Activated CD4-positive, alpha-beta memory T cell treated with anti-CD3 and anti-CD28 coated beads, Interleukin-2, amount 10 ng/mL, durations not matched to agents 7 days and 5 days (primary cell): ENCODE measurements at regions of chr19 and their contacts with region 1.

Region 1: GRCh38 chr19:3479177-3479833 is 1.0 kb downstream of the SMIM24 start:
- DNase-seq: peak; percentile 55
- H3K4me3 Mint-ChIP-seq: no peak overlapping the region
- H3K27ac Mint-ChIP-seq: no peak overlapping the region
- H3K4me1 Mint-ChIP-seq: peaks cover 9% of the 10 kb centered on the region
- H3K27me3 Mint-ChIP-seq: peaks cover 5% of the 10 kb centered on the region

Region 2: GRCh38 chr19:3304871-3305423 is 174.4 kb before region 1 on chr19:
- CTCF ChIA-PET with region 1: interaction called, 17 read pairs
- POLR2A ChIA-PET with region 1: no interaction called
- DNase-seq: peak; percentile 79
- H3K4me3 Mint-ChIP-seq: no peak overlapping the region
- H3K27ac Mint-ChIP-seq: no peak overlapping the region
- H3K4me1 Mint-ChIP-seq: no peaks in the 10 kb centered on the region
- H3K27me3 Mint-ChIP-seq: no peaks in the 10 kb centered on the region

Region 3: DNA sequence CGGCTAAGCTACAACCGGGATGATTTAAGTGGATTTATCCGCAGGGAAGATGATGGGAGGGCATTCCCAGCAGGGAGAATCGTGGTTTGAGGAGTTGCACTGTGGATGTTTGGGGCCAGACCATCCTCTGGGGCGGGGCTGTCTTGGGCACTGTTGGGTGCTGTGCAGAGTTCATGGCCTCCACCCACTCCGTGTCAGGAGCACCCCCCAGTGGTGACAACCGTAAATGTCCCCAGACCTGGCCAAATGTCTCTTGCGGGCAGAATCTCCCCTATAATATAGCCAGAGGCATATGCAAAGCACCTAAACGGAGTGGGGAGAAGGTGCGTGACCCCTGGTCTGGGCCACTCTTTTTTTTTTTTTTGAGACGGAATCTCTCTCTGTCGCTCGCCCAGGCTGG is 39.2 kb before region 1 on chr19:
- CTCF ChIA-PET with region 1: no interaction called
- POLR2A ChIA-PET with region 1: no interaction called
- DNase-seq: peak; percentile 65
- H3K4me3 Mint-ChIP-seq: no peak overlapping the region
- H3K27ac Mint-ChIP-seq: no peak overlapping the region
- H3K4me1 Mint-ChIP-seq: peaks cover 9% of the 10 kb centered on the region
- H3K27me3 Mint-ChIP-seq: no peaks in the 10 kb centered on the region

Region 4: GRCh38 chr19:3459089-3459881 is 20.0 kb before region 1 on chr19:
- CTCF ChIA-PET with region 1: no interaction called
- POLR2A ChIA-PET with region 1: no interaction called
- DNase-seq: no peak
- H3K4me3 Mint-ChIP-seq: no peak overlapping the region
- H3K27ac Mint-ChIP-seq: no peak overlapping the region
- H3K4me1 Mint-ChIP-seq: peaks cover 2% of the 10 kb centered on the region
- H3K27me3 Mint-ChIP-seq: no peaks in the 10 kb centered on the region

Region 5: GRCh38 chr19:3494051-3494450 is 14.7 kb after region 1 on chr19:
- CTCF ChIA-PET with region 1: interaction called, 24 read pairs
- POLR2A ChIA-PET with region 1: interaction called, 4 read pairs
- DNase-seq: peak; percentile 45
- H3K4me3 Mint-ChIP-seq: no peak overlapping the region
- H3K27ac Mint-ChIP-seq: no peak overlapping the region
- H3K4me1 Mint-ChIP-seq: peaks cover 24% of the 10 kb centered on the region
- H3K27me3 Mint-ChIP-seq: no peaks in the 10 kb centered on the region